ENCODE measurements at regions of chr19 and their contacts with region 1.

Region 1: DNA sequence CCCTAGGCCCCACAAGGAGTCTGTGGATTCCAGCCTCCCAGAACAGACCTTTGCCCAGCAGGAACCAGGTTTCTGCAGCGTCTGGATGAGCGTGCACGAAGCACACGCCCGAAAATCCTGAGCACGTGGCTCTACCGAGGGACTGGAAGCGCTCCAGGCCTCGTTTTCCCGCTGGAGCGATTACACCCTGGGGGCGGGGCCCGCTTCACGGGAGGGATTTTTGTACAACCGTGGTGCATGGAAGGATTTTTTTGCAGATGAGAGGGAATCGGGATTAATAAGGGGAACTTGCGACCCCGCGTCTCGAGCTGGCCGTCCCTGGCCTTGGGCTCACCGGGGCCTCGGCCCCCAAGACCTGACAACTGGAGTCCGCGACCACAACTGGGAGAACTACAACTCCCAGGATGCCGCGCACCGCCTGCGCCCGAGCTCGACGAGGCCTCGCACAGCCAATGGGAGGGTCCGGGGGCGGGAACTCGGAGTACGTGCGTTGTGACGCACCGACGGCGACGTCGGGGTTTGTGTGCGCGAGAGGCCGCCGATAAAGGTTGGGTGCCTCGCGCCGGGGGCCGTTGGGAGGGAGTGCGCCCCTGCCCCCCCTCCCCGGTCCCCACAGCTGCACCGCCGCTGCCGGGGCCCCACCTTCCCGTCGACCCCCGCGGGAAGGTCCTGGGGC is at the start of gene ZNF628:
- DNase-seq: peak; percentile 96
- H3K4me3 Mint-ChIP-seq: peak within 1 kb of the TSS; percentile 91
- H3K27ac Mint-ChIP-seq: peak within 1 kb of the TSS; percentile 79
- H3K4me1 Mint-ChIP-seq: peaks cover 18% of the 10 kb centered on the region
- H3K27me3 Mint-ChIP-seq: peaks cover 2% of the 10 kb centered on the region
- total RNA-seq, gene ZNF628: 7.6 and 10.4 TPM in 2 replicates

Region 2: DNA sequence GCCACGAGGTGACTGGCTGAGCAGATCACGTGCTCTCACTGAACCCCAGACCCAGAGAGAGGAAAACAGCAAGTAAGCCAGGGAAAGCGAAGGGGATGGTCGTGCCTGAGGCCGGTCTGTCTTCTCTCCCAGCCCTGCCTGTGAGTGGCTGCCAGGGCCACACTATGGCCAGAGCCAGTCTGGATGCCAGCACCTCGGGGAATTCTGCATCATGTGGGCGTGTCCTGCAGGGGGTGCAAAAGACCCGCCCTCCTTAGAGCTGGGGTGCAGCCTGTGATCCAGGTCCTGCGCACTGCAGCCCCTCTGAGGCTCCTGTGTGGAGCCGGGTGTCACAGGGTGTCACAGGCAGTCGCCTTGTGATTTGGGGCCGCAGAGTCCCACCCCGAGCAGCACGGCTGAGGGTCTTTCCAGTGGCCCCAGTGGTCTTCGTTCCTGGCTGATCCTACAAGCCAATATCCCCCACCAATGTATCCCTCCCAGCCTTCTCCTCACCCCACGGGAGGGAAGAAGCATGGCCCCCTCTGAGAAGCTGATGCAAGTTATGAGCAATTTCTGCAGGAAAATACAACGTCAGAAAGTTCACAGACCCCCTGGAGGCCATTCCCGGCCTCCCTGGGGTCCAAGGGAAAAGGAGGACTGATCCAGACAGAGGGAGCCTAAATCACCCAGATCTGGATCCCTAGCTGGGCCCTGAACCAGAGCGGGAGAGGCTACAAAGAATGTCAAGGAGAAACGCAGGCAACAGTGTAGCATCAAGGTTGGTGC is 366.5 kb before region 1 on chr19:
- intact Hi-C with region 1: no loop called
- DNase-seq: no peak
- H3K4me3 Mint-ChIP-seq: no peak overlapping the region
- H3K27ac Mint-ChIP-seq: no peak overlapping the region
- H3K4me1 Mint-ChIP-seq: no peaks in the 10 kb centered on the region
- H3K27me3 Mint-ChIP-seq: no peaks in the 10 kb centered on the region

Region 3: GRCh38 chr19:55279770-55280643 is 196.2 kb before region 1 on chr19 and contains the start of gene HSPBP1:
- intact Hi-C with region 1: loop called (anchors 1 kb)
- DNase-seq: peak; percentile 95
- H3K4me3 Mint-ChIP-seq: peak within 1 kb of the TSS; percentile 99
- H3K27ac Mint-ChIP-seq: peak within 1 kb of the TSS; percentile 96
- H3K4me1 Mint-ChIP-seq: peaks cover 51% of the 10 kb centered on the region
- H3K27me3 Mint-ChIP-seq: peaks cover 7% of the 10 kb centered on the region
- total RNA-seq, gene HSPBP1: 66.4 and 69.6 TPM in 2 replicates

Region 4: DNA sequence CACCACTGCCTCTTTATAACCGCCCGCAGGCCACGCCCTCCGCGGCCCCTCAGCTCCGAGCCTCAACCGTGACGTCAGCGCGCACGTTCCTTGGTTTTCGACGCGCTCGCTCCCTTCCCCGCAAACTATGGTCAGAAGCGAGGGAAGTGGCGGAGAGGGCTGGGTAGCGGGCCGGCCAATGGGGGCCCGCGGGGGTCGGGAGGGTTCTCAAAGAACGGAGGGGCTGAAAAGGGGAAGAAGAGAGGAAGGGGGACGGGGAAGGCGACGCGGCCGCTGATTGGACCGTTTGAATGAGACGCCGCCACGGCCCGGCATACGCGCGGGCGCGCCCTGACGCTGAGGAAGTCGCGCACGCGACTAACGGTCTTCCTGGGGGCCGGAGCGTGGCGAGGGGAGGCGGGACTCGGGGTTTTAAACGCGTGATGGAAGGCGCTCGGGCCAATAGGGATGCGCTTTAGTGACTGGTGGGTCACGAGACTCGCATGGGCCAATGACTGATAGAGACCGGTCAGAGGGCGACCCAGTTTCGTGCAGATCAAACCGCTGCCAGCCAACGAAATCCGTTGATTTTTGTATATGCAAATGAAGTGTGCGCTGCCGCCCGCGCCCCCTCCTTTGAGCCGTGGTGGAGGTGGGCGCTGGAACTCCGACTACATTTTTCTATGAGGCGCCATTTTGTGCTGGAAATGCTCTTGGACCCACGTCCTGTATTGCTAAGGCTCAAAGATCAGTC is 68.3 kb before region 1 on chr19:
- intact Hi-C with region 1: loop called (anchors 1 kb)
- DNase-seq: peak; percentile 96
- H3K4me3 Mint-ChIP-seq: peak overlapping the region; percentile 93
- H3K27ac Mint-ChIP-seq: peak overlapping the region; percentile 97
- H3K4me1 Mint-ChIP-seq: peaks cover 26% of the 10 kb centered on the region
- H3K27me3 Mint-ChIP-seq: peaks cover 6% of the 10 kb centered on the region

Region 5: DNA sequence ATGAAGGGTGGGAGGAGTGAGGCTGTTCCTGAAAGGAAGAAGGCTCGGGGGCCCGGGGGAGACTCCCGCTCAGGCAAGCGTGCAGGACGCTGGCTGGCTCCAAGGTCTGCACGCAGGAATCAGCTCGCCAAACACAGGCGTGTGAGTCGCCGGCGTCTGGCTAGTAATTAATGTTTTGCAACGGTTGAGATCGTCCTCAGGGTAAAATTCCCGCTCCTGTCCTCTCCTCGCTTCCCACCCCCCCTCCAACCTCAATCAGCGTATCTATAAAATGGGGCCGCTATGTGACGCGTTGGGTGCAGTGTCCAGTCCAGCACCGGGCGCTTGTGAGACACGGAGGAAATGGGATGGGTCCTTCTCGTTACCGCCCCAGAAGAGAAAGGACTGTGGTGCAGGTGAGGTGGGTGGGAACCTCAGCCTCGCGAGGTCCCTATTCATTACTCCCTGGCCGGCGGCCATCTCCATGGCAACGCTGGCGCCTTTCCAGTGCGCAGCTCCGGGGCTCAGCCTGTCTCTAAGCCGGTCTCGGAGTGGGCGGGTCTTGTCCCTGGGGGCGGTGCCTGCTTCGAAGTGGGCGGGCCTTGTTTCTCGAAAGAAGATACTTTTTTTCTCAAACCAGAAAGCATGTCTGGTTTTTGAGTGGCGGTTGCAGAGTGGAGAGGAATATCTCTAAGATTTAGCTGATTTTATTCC is 110.9 kb after region 1 on chr19:
- intact Hi-C with region 1: loop called (anchors 1 kb)
- DNase-seq: peak; percentile 88
- H3K4me3 Mint-ChIP-seq: peak overlapping the region; percentile 79
- H3K27ac Mint-ChIP-seq: no peak overlapping the region
- H3K4me1 Mint-ChIP-seq: peaks cover 19% of the 10 kb centered on the region
- H3K27me3 Mint-ChIP-seq: peaks cover 22% of the 10 kb centered on the region

Region 6: DNA sequence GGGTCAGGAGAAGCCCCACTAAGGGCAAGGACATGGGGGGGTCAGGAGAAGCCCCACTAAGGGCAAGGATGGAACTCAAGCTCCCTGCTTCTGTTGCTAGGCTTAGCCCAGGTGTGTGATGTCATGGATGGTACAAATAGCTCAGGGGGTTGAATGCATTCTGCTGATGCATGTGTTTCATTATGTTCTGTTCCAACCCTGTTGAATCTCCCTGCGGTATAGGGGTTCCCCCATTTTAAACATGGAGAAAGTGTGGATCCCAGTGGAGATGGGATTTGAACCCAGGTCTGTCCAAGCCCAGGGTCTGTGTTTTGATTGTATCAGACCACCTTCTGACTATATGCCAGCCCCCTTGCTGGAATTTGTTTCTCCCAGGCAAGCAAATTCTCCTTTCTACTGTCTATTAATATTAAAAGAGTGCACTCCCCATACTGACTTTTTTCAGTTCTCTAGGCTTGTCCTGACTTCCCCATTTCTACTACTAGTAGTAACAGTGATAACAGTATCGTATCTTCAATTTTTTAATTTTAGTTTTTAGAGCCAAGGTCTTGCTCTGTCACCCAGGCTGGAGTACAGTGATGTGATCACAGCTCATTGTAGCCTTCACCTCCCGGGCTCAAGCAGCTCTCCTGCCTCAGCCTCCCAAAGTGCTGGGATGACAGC is 135.9 kb after region 1 on chr19:
- intact Hi-C with region 1: no loop called
- DNase-seq: no peak
- H3K4me3 Mint-ChIP-seq: no peak overlapping the region
- H3K27ac Mint-ChIP-seq: no peak overlapping the region
- H3K4me1 Mint-ChIP-seq: peaks cover 7% of the 10 kb centered on the region
- H3K27me3 Mint-ChIP-seq: no peaks in the 10 kb centered on the region

Region 7: DNA sequence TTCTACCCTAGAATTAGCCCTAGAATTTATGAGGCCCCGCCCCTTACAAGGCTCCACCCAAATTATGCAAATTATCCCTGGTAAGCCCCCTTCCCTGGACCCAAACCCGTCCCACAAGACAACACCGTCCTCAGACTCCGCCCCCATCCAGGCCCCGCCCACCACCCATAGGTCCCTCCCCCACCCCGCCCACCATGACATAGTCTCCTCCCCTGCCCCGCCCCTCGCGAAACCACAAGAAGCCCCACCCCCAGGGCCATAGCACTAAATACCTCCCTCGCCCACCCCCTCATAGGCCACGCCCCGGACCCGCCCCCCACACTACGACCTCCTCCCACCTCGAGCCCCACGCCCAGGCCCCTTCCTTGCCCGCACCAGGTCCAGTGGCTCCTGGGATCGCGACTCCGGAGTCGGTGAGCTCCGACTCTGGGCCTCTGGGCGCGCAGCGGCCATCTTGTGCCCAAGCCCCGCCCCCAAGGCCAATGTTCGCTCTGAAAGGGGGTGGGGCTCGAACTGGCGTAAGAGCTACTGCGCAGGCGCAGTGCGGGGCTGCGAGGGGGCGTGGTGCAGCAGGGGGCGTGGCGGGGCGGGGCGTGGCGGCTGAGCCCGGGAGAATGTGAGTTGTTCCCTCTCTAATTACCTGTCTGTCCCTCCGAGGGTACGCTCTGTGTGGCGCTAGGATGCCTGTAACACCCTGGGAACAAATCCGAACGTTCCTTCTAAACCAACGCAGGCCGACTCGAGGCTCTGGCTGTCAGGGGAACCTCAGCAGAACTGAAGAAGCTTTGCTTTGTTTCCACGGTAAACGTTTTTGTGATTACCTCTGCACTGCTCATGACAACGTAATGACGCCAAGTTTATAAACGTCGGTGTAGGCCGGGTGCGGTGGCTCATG is 148.1 kb after region 1 on chr19 and contains the start of gene ZNF784:
- intact Hi-C with region 1: loop called (anchors 1 kb)
- DNase-seq: peak; percentile 91
- H3K4me3 Mint-ChIP-seq: peak within 1 kb of the TSS; percentile 90
- H3K27ac Mint-ChIP-seq: peak within 1 kb of the TSS; percentile 98
- H3K4me1 Mint-ChIP-seq: peaks cover 46% of the 10 kb centered on the region
- H3K27me3 Mint-ChIP-seq: peaks cover 20% of the 10 kb centered on the region
- total RNA-seq, gene ZNF784: 3.0 and 4.9 TPM in 2 replicates

Region 8: GRCh38 chr19:56567274-56568120 is 1091.3 kb after region 1 on chr19 and contains the start of gene ZNF470:
- intact Hi-C with region 1: loop called (anchors 5 kb)
- DNase-seq: peak; percentile 82
- H3K4me3 Mint-ChIP-seq: peak within 1 kb of the TSS; percentile 87
- H3K27ac Mint-ChIP-seq: peak within 1 kb of the TSS; percentile 89
- H3K4me1 Mint-ChIP-seq: no peaks in the 10 kb centered on the region
- H3K27me3 Mint-ChIP-seq: no peaks in the 10 kb centered on the region
- total RNA-seq, gene ZNF470: 1.2 and 2.4 TPM in 2 replicates

Measured in activated T-helper 1 cell treated with anti-CD3 and anti-CD28 coated beads, Interleukin-12 subunit alpha, Interleukin-12 subunit beta, Interleukin-2, Interleukin-4 antibody, amounts not matched to agents 30 ng/mL and 10 ng/mL and 1 ng/mL, durations not matched to agents 14 hours and 24 hours and 36 hours (primary cell).